Mammary epithelial cell (primary cell): ENCODE measurements at regions of chr14 and their contacts with region 1.

Region 1: DNA sequence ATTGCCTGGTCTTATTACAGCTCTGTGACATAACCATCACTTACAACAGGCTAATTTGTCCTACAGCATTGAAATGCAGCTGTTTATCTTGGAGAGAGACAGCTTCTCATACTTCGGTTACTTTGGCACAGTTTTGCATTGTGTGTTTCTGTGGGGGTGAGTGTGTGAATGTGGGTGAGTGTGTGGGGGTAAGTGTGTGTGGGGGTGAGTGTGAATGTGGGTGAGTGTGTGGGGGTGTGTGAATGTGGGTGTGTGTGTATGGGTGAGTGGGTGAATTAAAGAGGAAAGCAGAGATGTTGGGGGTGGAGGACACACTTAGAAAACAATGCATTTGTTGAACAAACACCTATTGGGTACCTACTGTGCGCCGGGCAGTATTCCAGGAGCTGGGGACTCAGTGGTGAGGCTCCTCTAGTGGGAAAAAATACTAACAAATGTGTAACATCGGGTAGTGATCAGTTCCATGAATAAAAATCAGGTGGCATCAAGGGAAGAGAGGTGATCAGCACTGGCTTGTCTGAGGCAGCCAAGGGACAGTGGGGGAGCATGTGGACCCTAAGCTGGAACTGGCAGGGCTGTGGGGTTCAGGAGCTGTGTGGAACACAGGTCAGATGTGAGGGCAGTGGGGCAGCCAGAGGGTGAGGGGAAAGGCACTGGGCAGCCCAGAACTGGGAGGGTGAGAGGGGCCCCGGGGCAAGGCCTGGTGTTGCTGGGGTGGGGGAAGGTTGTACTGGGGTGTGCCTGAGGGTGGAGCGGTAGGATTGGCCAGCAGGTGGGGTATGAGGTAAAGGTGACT is 44.1 kb upstream of the AMN start:
- DNase-seq: no peak
- H3K4me3 ChIP-seq: no peak overlapping the region
- H3K27ac ChIP-seq: no peak overlapping the region
- H3K4me1 ChIP-seq: no peaks in the 10 kb centered on the region
- H3K27me3 ChIP-seq: no peaks in the 10 kb centered on the region
- CTCF ChIP-seq: peak in 1 of 2 donors; percentile 18

Region 2: GRCh38 chr14:102913341-102914211 is 35.2 kb after region 1 on chr14:
- CTCF ChIA-PET with region 1: no interaction called
- dilution Hi-C with region 1: no loop called
- in situ Hi-C with region 1: no loop called
- intact Hi-C with region 1: no loop called
- DNase-seq: no peak
- H3K4me3 ChIP-seq: no peak overlapping the region
- H3K27ac ChIP-seq: no peak overlapping the region
- H3K4me1 ChIP-seq: no peaks in the 10 kb centered on the region
- H3K27me3 ChIP-seq: no peaks in the 10 kb centered on the region
- CTCF ChIP-seq: no peak

Region 3: DNA sequence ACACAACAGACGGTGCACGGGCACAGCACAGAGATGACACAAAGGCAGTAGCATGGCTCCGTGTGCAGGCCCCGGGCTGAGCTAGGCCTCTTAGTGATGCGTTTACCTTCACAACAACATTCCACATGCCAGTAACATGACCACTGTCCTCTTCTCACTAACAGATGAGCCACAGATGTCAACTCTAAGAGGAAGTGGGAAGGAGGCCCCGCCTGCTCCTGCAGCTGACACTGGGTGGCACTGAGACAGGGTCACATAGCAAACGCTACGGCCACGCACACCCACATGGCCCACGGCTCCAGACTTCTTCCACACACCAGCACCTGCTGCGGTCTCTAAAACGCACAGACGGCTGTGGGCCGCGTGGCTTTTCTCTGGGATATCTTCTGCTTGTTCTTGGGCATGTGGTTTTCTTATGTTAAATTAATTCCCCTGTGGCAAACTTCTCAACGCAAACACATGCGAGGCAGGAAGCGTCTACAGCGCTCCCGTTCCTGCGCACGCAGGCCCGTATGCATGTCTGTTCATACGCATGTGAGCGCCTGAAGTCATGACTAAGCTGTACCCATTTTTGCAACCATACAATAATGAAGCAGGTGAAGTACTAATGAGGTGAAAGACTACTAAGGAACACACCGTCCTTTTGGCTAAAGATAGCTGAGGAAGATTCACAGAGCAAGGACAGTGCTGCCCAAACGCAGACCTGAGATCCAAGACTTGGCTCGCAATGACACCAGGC is 70.9 kb after region 1 on chr14:
- CTCF ChIA-PET with region 1: no interaction called
- dilution Hi-C with region 1: loop called (anchors 10 kb)
- in situ Hi-C with region 1: no loop called
- intact Hi-C with region 1: no loop called
- DNase-seq: no peak
- H3K4me3 ChIP-seq: no peak overlapping the region
- H3K27ac ChIP-seq: no peak overlapping the region
- H3K4me1 ChIP-seq: peaks cover 6% of the 10 kb centered on the region
- H3K27me3 ChIP-seq: no peaks in the 10 kb centered on the region
- CTCF ChIP-seq: no peak